ENCODE measurements at regions of chr21 and their contacts with region 1.

Region 1: GRCh38 chr21:42818328-42818749 is 61.0 kb downstream of the WDR4 start:
- DNase-seq: peak; percentile 26 to 76 (median 54)
- ATAC-seq: peak; percentile 69 to 86 (median 78)
- H3K4me3 ChIP-seq: no peak overlapping the region
- H3K4me3 Mint-ChIP-seq: no peak overlapping the region
- H3K27ac ChIP-seq: no peak overlapping the region
- H3K27ac Mint-ChIP-seq: no peak overlapping the region
- H3K4me1 ChIP-seq: no peaks in the 10 kb centered on the region
- H3K4me1 Mint-ChIP-seq: peaks cover 0 to 4% (median 4%) of the 10 kb centered on the region in 3 donors
- H3K27me3 ChIP-seq: peaks cover 0 to 33% of the 10 kb centered on the region in 2 experiments
- H3K27me3 Mint-ChIP-seq: peaks cover 0 to 13% of the 10 kb centered on the region in 2 donors

Region 2: DNA sequence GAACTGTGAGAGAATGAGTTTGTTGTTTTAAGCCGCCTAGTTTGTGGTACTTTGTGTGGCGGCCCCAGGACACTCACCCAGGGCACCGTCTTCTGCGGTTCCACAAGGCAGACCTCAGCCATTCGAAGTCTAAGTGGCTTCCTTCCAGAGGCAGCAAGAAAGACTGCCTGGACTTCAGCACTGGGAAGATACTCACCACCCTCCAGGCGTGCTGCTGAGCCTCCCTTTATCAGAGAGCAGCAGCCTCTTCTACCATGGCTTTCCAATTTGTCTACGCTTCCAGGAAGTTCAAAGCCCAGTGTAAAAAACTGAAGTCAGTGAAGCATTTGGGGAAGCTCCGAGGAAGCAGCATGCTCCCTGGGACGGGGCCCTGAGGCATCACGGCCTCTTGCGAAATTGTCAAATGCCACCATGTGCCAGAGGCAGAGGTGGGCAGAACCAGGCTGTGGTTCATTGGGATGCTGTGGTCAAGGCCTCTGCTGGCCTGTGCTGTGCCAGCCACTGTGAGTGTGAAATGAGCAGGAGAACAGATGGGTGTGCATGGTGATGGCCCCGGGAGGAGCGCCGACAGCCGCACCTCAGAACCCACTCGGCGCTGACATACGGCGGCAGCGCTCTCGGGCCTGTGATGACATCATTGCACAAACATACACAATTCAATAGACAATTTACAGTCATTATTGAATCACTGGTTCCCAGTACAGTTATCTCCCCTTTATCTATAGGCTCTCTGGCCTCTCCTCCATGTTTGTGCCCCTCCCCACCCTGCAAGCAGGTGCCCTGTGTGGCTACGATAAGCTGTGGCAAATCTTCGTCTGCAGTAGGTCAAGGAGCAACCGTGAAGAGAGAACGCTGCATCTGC is 54.5 kb before region 1 on chr21:
- CTCF ChIA-PET with region 1: no interaction called
- POLR2A ChIA-PET with region 1: no interaction called
- DNase-seq: no peak
- ATAC-seq: no peak
- H3K4me3 ChIP-seq: no peak overlapping the region
- H3K4me3 Mint-ChIP-seq: no peak overlapping the region
- H3K27ac ChIP-seq: no peak overlapping the region
- H3K27ac Mint-ChIP-seq: no peak overlapping the region
- H3K4me1 ChIP-seq: no peaks in the 10 kb centered on the region
- H3K4me1 Mint-ChIP-seq: peaks cover 0 to 8% (median 0%) of the 10 kb centered on the region in 3 donors
- H3K27me3 ChIP-seq: no peaks in the 10 kb centered on the region
- H3K27me3 Mint-ChIP-seq: no peaks in the 10 kb centered on the region

Region 3: GRCh38 chr21:42796327-42797062 is 21.8 kb before region 1 on chr21:
- CTCF ChIA-PET with region 1: interaction called, 4 to 10 read pairs
- POLR2A ChIA-PET with region 1: no interaction called
- DNase-seq: no peak
- ATAC-seq: no peak
- H3K4me3 ChIP-seq: no peak overlapping the region
- H3K4me3 Mint-ChIP-seq: no peak overlapping the region
- H3K27ac ChIP-seq: no peak overlapping the region
- H3K27ac Mint-ChIP-seq: no peak overlapping the region
- H3K4me1 ChIP-seq: no peaks in the 10 kb centered on the region
- H3K4me1 Mint-ChIP-seq: peaks cover 2 to 7% (median 3%) of the 10 kb centered on the region in 3 donors
- H3K27me3 ChIP-seq: peaks cover 0 to 8% of the 10 kb centered on the region in 2 experiments
- H3K27me3 Mint-ChIP-seq: peaks cover 0 to 2% of the 10 kb centered on the region in 2 donors

Region 4: DNA sequence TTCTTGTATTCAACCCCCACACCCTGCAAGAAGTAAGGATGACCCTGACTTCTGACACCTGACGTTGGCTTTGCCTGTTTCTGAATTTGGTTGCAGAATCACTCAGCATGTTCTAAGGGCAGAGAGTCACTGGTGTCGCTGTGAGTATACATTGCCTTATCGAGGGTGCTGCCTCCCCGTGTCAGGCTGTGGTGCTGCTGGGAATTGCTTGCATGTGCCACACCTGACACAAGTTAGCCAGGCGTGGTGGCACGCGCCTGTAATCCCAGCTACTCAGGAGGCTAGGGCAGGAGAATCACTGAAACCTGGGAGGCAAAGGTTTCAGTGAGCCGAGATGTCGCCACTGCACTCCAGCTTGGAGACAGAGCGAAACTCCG is 15.1 kb after region 1 on chr21:
- CTCF ChIA-PET with region 1: no interaction called
- POLR2A ChIA-PET with region 1: no interaction called
- DNase-seq: peak in 34 of 35 experiments; percentile 32 to 70 (median 50)
- ATAC-seq: peak; percentile 73 to 83 (median 76)
- H3K4me3 ChIP-seq: no peak overlapping the region
- H3K4me3 Mint-ChIP-seq: peak overlapping the region; percentile 67 to 79 (median 69)
- H3K27ac ChIP-seq: no peak overlapping the region
- H3K27ac Mint-ChIP-seq: peak overlapping the region; percentile 73 to 81
- H3K4me1 ChIP-seq: peaks cover 19 to 34% of the 10 kb centered on the region in 2 experiments
- H3K4me1 Mint-ChIP-seq: peaks cover 30 to 40% (median 37%) of the 10 kb centered on the region in 3 donors
- H3K27me3 ChIP-seq: peaks cover 0 to 22% of the 10 kb centered on the region in 2 experiments
- H3K27me3 Mint-ChIP-seq: peaks cover 0 to 7% of the 10 kb centered on the region in 2 donors

Region 5: GRCh38 chr21:42892931-42893755 is 74.8 kb after region 1 on chr21 and contains the start of gene NDUFV3:
- CTCF ChIA-PET with region 1: no interaction called
- POLR2A ChIA-PET with region 1: interaction called in 1 of 2 experiments, 11 read pairs
- DNase-seq: peak; percentile 97 to 100 (median 100)
- ATAC-seq: peak; percentile 93 to 97 (median 95)
- H3K4me3 ChIP-seq: peak within 1 kb of the TSS; percentile 80 to 85
- H3K4me3 Mint-ChIP-seq: peak within 1 kb of the TSS; percentile 82 to 94 (median 83)
- H3K27ac ChIP-seq: peak within 1 kb of the TSS; percentile 93
- H3K27ac Mint-ChIP-seq: peak within 1 kb of the TSS; percentile 87 to 96
- H3K4me1 ChIP-seq: peaks cover 3 to 20% of the 10 kb centered on the region in 2 experiments
- H3K4me1 Mint-ChIP-seq: peaks cover 15 to 20% (median 18%) of the 10 kb centered on the region in 3 donors
- H3K27me3 ChIP-seq: no peaks in the 10 kb centered on the region
- H3K27me3 Mint-ChIP-seq: no peaks in the 10 kb centered on the region
- total RNA-seq, gene NDUFV3: 21.3 to 32.0 (median 28.5) TPM

Measured in T-cell (primary cell).